CD4-positive, alpha-beta memory T cell (primary cell): ENCODE measurements at regions of chr11 and their contacts with region 1.

Region 1: GRCh38 chr11:10770626-10771254 is 19.7 kb downstream of the CTR9 start:
- DNase-seq: peak in 2 of 5 donors; percentile 5 to 12
- H3K4me3 ChIP-seq: no peak overlapping the region
- H3K4me3 Mint-ChIP-seq: no peak overlapping the region
- H3K27ac ChIP-seq: no peak overlapping the region
- H3K27ac Mint-ChIP-seq: peak overlapping the region in 1 of 7 donors; percentile 13
- H3K4me1 ChIP-seq: no peaks in the 10 kb centered on the region
- H3K4me1 Mint-ChIP-seq: no peaks in the 10 kb centered on the region
- H3K27me3 ChIP-seq: no peaks in the 10 kb centered on the region
- H3K27me3 Mint-ChIP-seq: no peaks in the 10 kb centered on the region

Region 2: GRCh38 chr11:10606536-10607208 is 164.1 kb before region 1 on chr11:
- CTCF ChIA-PET with region 1: no interaction called
- POLR2A ChIA-PET with region 1: no interaction called
- intact Hi-C with region 1: no loop called
- DNase-seq: no peak
- H3K4me3 ChIP-seq: no peak overlapping the region
- H3K4me3 Mint-ChIP-seq: no peak overlapping the region
- H3K27ac ChIP-seq: no peak overlapping the region
- H3K27ac Mint-ChIP-seq: no peak overlapping the region
- H3K4me1 ChIP-seq: no peaks in the 10 kb centered on the region
- H3K4me1 Mint-ChIP-seq: no peaks in the 10 kb centered on the region
- H3K27me3 ChIP-seq: no peaks in the 10 kb centered on the region
- H3K27me3 Mint-ChIP-seq: peaks cover 13 to 18% of the 10 kb centered on the region in 2 donors

Region 3: DNA sequence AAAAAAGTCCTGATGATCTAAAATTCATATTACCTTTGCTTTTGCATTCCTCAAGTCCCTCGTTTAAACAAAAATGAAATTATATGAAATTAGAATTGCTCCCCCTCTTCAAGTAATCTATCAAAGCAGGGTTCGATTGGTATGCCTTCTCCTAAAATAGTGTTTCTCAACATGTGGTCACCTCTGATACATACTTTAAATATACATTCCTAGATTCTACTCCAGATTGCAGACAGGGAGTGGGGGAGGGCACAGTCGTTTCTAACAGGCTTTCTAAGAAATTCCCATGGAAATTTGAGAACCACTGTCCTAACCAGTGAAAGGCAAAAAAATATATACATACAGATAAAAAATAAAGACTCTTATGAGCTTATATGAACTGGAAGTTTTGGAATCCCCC is 54.6 kb before region 1 on chr11:
- CTCF ChIA-PET with region 1: no interaction called
- POLR2A ChIA-PET with region 1: no interaction called
- intact Hi-C with region 1: no loop called
- DNase-seq: no peak
- H3K4me3 ChIP-seq: no peak overlapping the region
- H3K4me3 Mint-ChIP-seq: no peak overlapping the region
- H3K27ac ChIP-seq: no peak overlapping the region
- H3K27ac Mint-ChIP-seq: no peak overlapping the region
- H3K4me1 ChIP-seq: no peaks in the 10 kb centered on the region
- H3K4me1 Mint-ChIP-seq: no peaks in the 10 kb centered on the region
- H3K27me3 ChIP-seq: no peaks in the 10 kb centered on the region
- H3K27me3 Mint-ChIP-seq: peaks cover 2 to 4% of the 10 kb centered on the region in 2 donors

Region 4: DNA sequence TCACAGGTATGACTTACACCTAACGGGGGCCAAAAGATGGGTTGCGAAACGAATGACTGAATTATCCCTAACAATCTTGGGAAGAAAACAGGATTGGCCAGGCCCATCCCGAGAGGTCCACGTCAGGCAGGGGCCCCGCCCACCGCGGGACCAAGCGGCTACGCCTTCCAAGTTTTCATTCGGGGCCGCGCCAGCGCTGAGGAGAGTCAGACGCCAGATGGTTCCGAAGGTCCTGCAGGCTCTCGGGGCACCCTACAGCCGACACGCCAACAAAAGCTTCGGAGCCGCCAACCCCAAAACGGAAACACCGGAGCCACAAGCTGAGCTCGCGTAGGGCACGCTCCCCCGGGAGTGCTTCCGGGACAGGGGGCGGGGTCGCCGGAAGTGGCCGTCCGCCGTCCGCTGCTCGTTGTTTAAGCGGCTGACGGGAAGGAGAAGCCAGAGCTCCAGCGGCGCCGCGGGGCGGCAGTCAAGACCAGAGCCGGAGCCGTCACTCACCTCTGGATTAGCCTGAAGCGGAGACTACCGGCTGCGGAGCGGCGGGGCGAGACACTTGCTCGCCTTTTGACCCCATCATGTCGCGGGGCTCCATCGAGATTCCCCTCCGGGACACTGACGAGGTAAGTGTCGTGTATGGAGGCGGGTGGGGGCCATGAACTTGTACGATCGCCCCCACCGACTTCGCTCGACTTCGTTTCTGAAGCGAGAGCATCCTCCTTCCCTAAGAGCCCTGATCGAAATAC is 19.7 kb before region 1 on chr11 and contains the start of gene CTR9:
- CTCF ChIA-PET with region 1: interaction called, 27 read pairs
- POLR2A ChIA-PET with region 1: interaction called, 3 read pairs
- intact Hi-C with region 1: loop called (anchors 2 kb)
- DNase-seq: peak; percentile 88 to 91 (median 89)
- H3K4me3 ChIP-seq: peak within 1 kb of the TSS; percentile 95 to 96
- H3K4me3 Mint-ChIP-seq: peak within 1 kb of the TSS; percentile 92 to 98 (median 97)
- H3K27ac ChIP-seq: peak within 1 kb of the TSS; percentile 81
- H3K27ac Mint-ChIP-seq: peak within 1 kb of the TSS; percentile 81 to 97 (median 94)
- H3K4me1 ChIP-seq: peaks cover 29% of the 10 kb centered on the region
- H3K4me1 Mint-ChIP-seq: peaks cover 14 to 46% (median 20%) of the 10 kb centered on the region in 4 donors
- H3K27me3 ChIP-seq: no peaks in the 10 kb centered on the region
- H3K27me3 Mint-ChIP-seq: no peaks in the 10 kb centered on the region
- total RNA-seq, gene CTR9: 57.2 to 68.6 TPM

Region 5: GRCh38 chr11:10899121-10899830 is 128.5 kb after region 1 on chr11:
- CTCF ChIA-PET with region 1: no interaction called
- POLR2A ChIA-PET with region 1: no interaction called
- intact Hi-C with region 1: no loop called
- DNase-seq: no peak
- H3K4me3 ChIP-seq: no peak overlapping the region
- H3K4me3 Mint-ChIP-seq: no peak overlapping the region
- H3K27ac ChIP-seq: no peak overlapping the region
- H3K27ac Mint-ChIP-seq: peak overlapping the region in 1 of 7 donors; percentile 75
- H3K4me1 ChIP-seq: no peaks in the 10 kb centered on the region
- H3K4me1 Mint-ChIP-seq: no peaks in the 10 kb centered on the region
- H3K27me3 ChIP-seq: no peaks in the 10 kb centered on the region
- H3K27me3 Mint-ChIP-seq: peaks cover 0 to 3% of the 10 kb centered on the region in 2 donors

Region 6: DNA sequence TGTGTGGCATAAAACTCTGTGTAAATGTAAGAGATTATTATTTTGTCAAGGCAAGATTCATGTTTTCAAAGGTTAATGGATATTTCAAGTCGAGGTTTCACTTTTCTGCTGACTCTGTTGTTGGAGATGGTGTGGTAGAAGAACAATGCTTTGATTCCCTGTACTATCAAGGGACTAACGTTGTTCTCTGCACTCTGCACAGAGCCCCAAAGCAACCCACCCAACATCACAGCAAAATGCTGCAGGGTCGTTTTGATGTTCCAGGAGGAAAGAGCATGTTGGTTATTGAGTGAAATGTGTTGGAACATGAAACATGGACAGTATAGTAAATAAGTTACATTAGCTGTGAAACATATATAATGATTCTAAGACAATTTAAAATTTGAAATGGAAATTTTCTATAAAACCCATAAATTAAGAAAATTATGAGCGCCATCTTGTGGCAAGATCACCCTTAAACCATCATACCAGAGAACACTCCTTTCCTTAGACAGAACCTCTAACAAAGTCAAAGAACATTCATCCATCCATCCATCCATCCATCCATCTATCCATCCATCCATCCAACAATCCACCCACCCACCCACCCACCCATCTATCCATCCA is 251.5 kb after region 1 on chr11:
- CTCF ChIA-PET with region 1: interaction called, 22 read pairs
- POLR2A ChIA-PET with region 1: no interaction called
- intact Hi-C with region 1: loop called (anchors 5 kb)
- DNase-seq: peak in 2 of 5 donors; percentile 7 to 17
- H3K4me3 ChIP-seq: no peak overlapping the region
- H3K4me3 Mint-ChIP-seq: no peak overlapping the region
- H3K27ac ChIP-seq: no peak overlapping the region
- H3K27ac Mint-ChIP-seq: no peak overlapping the region
- H3K4me1 ChIP-seq: no peaks in the 10 kb centered on the region
- H3K4me1 Mint-ChIP-seq: no peaks in the 10 kb centered on the region
- H3K27me3 ChIP-seq: no peaks in the 10 kb centered on the region
- H3K27me3 Mint-ChIP-seq: peaks cover 0 to 6% of the 10 kb centered on the region in 2 donors

Region 7: GRCh38 chr11:11787305-11788062 is 1016.7 kb after region 1 on chr11:
- CTCF ChIA-PET with region 1: no interaction called
- POLR2A ChIA-PET with region 1: no interaction called
- intact Hi-C with region 1: loop called (anchors 1 kb)
- DNase-seq: peak; percentile 59 to 67 (median 61)
- H3K4me3 ChIP-seq: no peak overlapping the region
- H3K4me3 Mint-ChIP-seq: no peak overlapping the region
- H3K27ac ChIP-seq: no peak overlapping the region
- H3K27ac Mint-ChIP-seq: no peak overlapping the region
- H3K4me1 ChIP-seq: no peaks in the 10 kb centered on the region
- H3K4me1 Mint-ChIP-seq: peaks cover 0 to 1% (median 0%) of the 10 kb centered on the region in 4 donors
- H3K27me3 ChIP-seq: no peaks in the 10 kb centered on the region
- H3K27me3 Mint-ChIP-seq: peaks cover 0 to 7% of the 10 kb centered on the region in 2 donors